ENCODE measurements at regions of chr7 and their contacts with region 1.

Region 1: GRCh38 chr7:103074519-103075336 is at the starts of genes ARMC10 and FBXL13:
- DNase-seq: peak; percentile 86 to 93 (median 88)
- ATAC-seq: peak; percentile 93
- H3K4me3 ChIP-seq: peak within 1 kb of the TSS; percentile 77
- H3K4me3 Mint-ChIP-seq: peak within 1 kb of the TSS; percentile 94 to 100 (median 97)
- H3K27ac ChIP-seq: peak within 1 kb of the TSS; percentile 81
- H3K27ac Mint-ChIP-seq: peak within 1 kb of the TSS; percentile 85 to 98 (median 93)
- H3K4me1 ChIP-seq: peaks cover 14 to 18% of the 10 kb centered on the region in 2 donors
- H3K4me1 Mint-ChIP-seq: peaks cover 21 to 53% (median 47%) of the 10 kb centered on the region in 7 donors
- H3K27me3 ChIP-seq: no peaks in the 10 kb centered on the region
- H3K27me3 Mint-ChIP-seq: peaks cover 0 to 2% (median 0%) of the 10 kb centered on the region in 5 donors
- total RNA-seq, gene ARMC10: 13.6 to 36.4 (median 27.5) TPM
- total RNA-seq, gene FBXL13: 0.44 to 1.9 (median 1.2) TPM

Region 2: DNA sequence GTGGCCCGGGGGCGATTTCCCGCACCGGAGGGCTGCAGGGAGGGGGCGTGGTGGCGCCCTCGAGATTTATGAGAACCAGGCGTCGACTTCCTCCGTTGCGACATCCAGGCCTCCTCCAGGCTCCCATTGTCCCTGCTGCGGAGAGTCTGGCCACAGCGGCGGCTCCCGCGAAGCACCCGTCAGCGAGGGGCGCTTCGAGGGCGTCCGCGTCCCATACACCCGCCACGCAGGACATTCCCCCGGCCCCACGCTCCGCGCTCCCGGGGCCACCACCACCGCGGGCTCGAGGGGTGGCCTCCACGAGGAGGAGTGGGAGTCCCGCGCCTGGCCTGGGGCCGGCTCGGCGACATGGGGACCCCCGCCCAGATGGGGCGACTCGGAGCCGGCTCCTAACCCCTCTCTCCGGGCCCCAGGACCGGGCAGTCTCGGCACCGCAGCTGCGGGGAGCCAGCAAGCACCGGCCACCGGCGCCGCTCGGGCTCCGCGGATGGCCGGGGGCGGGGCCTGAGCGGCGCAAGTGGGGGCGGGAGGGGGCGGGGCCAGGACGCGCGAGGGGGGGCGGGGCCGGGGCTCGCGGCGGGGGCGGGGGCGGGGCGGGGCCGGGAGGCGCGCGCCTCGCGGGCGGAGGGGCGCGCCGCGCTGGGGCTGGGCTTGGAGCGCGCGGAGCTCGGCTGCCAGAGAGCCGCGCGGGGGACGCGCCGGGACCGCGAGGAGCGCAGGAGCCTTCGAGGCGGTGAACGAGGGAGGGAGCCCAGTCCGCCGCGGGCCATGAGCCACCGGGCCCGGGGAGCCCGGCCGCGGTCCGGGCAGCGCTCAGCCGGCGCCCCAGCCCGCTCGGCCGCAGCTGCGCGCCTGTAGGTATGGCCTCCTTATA is 788.3 kb before region 1 on chr7 and contains the start of gene SH2B2:
- CTCF ChIA-PET with region 1: no interaction called
- POLR2A ChIA-PET with region 1: no interaction called
- intact Hi-C with region 1: loop called in 1 of 2 experiments (anchors 2 kb)
- DNase-seq: peak; percentile 31 to 62 (median 50)
- ATAC-seq: peak; percentile 73
- H3K4me3 ChIP-seq: peak within 1 kb of the TSS; percentile 67
- H3K4me3 Mint-ChIP-seq: peak within 1 kb of the TSS; percentile 71 to 88 (median 80)
- H3K27ac ChIP-seq: peak within 1 kb of the TSS; percentile 61
- H3K27ac Mint-ChIP-seq: peak within 1 kb of the TSS in 4 of 9 donors; percentile 33 to 73 (median 67)
- H3K4me1 ChIP-seq: peaks cover 16 to 17% of the 10 kb centered on the region in 2 donors
- H3K4me1 Mint-ChIP-seq: peaks cover 16 to 37% (median 31%) of the 10 kb centered on the region in 7 donors
- H3K27me3 ChIP-seq: no peaks in the 10 kb centered on the region
- H3K27me3 Mint-ChIP-seq: peaks cover 0 to 22% (median 0%) of the 10 kb centered on the region in 5 donors
- total RNA-seq, gene SH2B2: 0.87 to 10.9 (median 2.0) TPM

Region 3: GRCh38 chr7:102991540-102992214 is 83.1 kb before region 1 on chr7:
- CTCF ChIA-PET with region 1: no interaction called
- POLR2A ChIA-PET with region 1: no interaction called
- intact Hi-C with region 1: no loop called
- DNase-seq: no peak
- ATAC-seq: peak; percentile 38
- H3K4me3 ChIP-seq: no peak overlapping the region
- H3K4me3 Mint-ChIP-seq: no peak overlapping the region
- H3K27ac ChIP-seq: no peak overlapping the region
- H3K27ac Mint-ChIP-seq: no peak overlapping the region
- H3K4me1 ChIP-seq: no peaks in the 10 kb centered on the region
- H3K4me1 Mint-ChIP-seq: peaks cover 0 to 5% (median 0%) of the 10 kb centered on the region in 7 donors
- H3K27me3 ChIP-seq: no peaks in the 10 kb centered on the region
- H3K27me3 Mint-ChIP-seq: no peaks in the 10 kb centered on the region

Region 4: DNA sequence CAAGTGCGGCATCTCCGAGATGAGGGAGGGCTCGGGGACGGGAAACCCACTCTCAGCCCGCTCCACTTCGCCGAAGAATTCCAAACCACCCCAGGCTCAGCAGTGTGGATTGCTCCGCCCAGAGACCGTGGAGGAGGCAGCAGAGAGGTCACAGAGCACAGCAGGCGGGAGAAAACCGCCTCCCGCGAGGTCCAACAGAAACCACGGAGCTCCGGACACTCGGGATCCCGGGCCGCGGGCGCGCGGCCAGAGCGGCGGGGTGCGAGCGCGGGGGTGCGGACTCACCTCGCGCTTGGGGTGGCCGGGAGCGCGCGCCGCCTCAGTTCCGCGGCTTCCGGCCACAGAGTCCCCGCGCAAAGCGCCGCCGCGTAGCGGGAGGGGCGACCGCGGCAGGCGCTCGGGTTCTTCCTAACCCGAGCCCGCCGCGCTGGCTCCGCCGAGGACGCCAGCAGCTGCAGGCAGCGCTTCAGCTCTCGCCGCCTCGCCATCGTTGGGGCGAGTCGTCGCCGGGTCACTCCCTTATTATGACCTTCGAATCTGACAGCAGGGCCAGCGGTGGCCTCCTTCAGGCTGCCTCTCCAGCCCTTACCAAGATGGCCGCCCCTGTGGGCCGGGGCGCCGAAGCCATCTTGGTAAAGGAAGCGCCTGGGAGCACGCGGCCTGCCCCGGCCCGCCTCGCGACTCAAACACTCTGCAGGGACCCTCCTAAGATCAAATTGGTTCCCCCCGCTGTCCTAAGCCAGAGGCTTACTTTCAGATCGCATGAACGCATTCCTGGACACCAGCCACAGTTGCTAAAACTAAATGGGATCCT is 74.5 kb after region 1 on chr7 and contains the start of gene NAPEPLD:
- CTCF ChIA-PET with region 1: interaction called, 3 read pairs
- POLR2A ChIA-PET with region 1: interaction called, 16 read pairs
- intact Hi-C with region 1: loop called (anchors 1 kb)
- DNase-seq: peak; percentile 61 to 87 (median 83)
- ATAC-seq: peak; percentile 93
- H3K4me3 ChIP-seq: peak within 1 kb of the TSS; percentile 87
- H3K4me3 Mint-ChIP-seq: peak within 1 kb of the TSS; percentile 91 to 99 (median 97)
- H3K27ac ChIP-seq: peak within 1 kb of the TSS; percentile 84
- H3K27ac Mint-ChIP-seq: peak within 1 kb of the TSS; percentile 91 to 99 (median 97)
- H3K4me1 ChIP-seq: peaks cover 0 to 23% of the 10 kb centered on the region in 2 donors
- H3K4me1 Mint-ChIP-seq: peaks cover 19 to 49% (median 46%) of the 10 kb centered on the region in 7 donors
- H3K27me3 ChIP-seq: no peaks in the 10 kb centered on the region
- H3K27me3 Mint-ChIP-seq: no peaks in the 10 kb centered on the region
- total RNA-seq, gene NAPEPLD: 2.9 to 19.7 (median 14.0) TPM

Region 5: GRCh38 chr7:104207731-104208420 is 1133.1 kb after region 1 on chr7 and contains the start of gene ORC5:
- CTCF ChIA-PET with region 1: no interaction called
- POLR2A ChIA-PET with region 1: no interaction called
- intact Hi-C with region 1: loop called (anchors 10 kb)
- DNase-seq: peak; percentile 57 to 85 (median 74)
- ATAC-seq: peak; percentile 99
- H3K4me3 ChIP-seq: peak within 1 kb of the TSS; percentile 93
- H3K4me3 Mint-ChIP-seq: peak within 1 kb of the TSS; percentile 91 to 99 (median 95)
- H3K27ac ChIP-seq: peak within 1 kb of the TSS; percentile 88
- H3K27ac Mint-ChIP-seq: peak within 1 kb of the TSS; percentile 88 to 98 (median 93)
- H3K4me1 ChIP-seq: peaks cover 15 to 17% of the 10 kb centered on the region in 2 donors
- H3K4me1 Mint-ChIP-seq: peaks cover 18 to 57% (median 38%) of the 10 kb centered on the region in 7 donors
- H3K27me3 ChIP-seq: no peaks in the 10 kb centered on the region
- H3K27me3 Mint-ChIP-seq: peaks cover 13 to 25% (median 19%) of the 10 kb centered on the region in 5 donors
- total RNA-seq, gene ORC5: 15.9 to 28.0 (median 24.5) TPM